Adrenal gland (tissue), 19 donors: ENCODE measurements at regions of chr7 and their contacts with region 1.

Region 1: GRCh38 chr7:130010689-130011412 is 40.3 kb downstream of the ZC3HC1 start:
- DNase-seq: peak; percentile 78 to 98 (median 90)
- H3K4me3 ChIP-seq: no peak overlapping the region
- H3K27ac ChIP-seq: peak overlapping the region in 3 of 5 donors; percentile 54 to 87 (median 67)
- H3K4me1 ChIP-seq: peaks cover 8 to 22% of the 10 kb centered on the region in 2 donors
- H3K27me3 ChIP-seq: no peaks in the 10 kb centered on the region
- CTCF ChIP-seq: peak; percentile 84 to 99 (median 98)
- POLR2A ChIP-seq: no peak

Region 2: GRCh38 chr7:129664029-129665012 is 346.5 kb before region 1 on chr7:
- intact Hi-C with region 1: loop called (anchors 5 kb)
- DNase-seq: peak in 1 of 7 donors; percentile 21
- H3K4me3 ChIP-seq: no peak overlapping the region
- H3K27ac ChIP-seq: no peak overlapping the region
- H3K4me1 ChIP-seq: peaks cover 5 to 9% of the 10 kb centered on the region in 2 donors
- H3K27me3 ChIP-seq: no peaks in the 10 kb centered on the region
- CTCF ChIP-seq: peak; percentile 28 to 75 (median 69)
- POLR2A ChIP-seq: no peak